Activated T-helper 1 cell treated with anti-CD3 and anti-CD28 coated beads, Interleukin-12 subunit alpha, Interleukin-12 subunit beta, Interleukin-2, Interleukin-4 antibody, amounts not matched to agents 30 ng/mL and 10 ng/mL and 1 ng/mL, durations not matched to agents 14 hours and 24 hours and 36 hours (primary cell): ENCODE measurements at regions of chr16 and their contacts with region 1.

Region 1: GRCh38 chr16:22001591-22001990 is 675 bp upstream of the PDZD9 start:
- DNase-seq: no peak
- H3K4me3 Mint-ChIP-seq: no peak overlapping the region
- H3K27ac Mint-ChIP-seq: no peak overlapping the region
- H3K4me1 Mint-ChIP-seq: peaks cover 19% of the 10 kb centered on the region
- H3K27me3 Mint-ChIP-seq: peaks cover 9% of the 10 kb centered on the region

Region 2: GRCh38 chr16:22077700-22078313 is 76.2 kb after region 1 on chr16:
- intact Hi-C with region 1: loop called (anchors 1 kb)
- DNase-seq: peak; percentile 48
- H3K4me3 Mint-ChIP-seq: no peak overlapping the region
- H3K27ac Mint-ChIP-seq: no peak overlapping the region
- H3K4me1 Mint-ChIP-seq: peaks cover 7% of the 10 kb centered on the region
- H3K27me3 Mint-ChIP-seq: no peaks in the 10 kb centered on the region

Region 3: GRCh38 chr16:22098405-22099255 is 97.0 kb after region 1 on chr16:
- intact Hi-C with region 1: loop called (anchors 1 kb)
- DNase-seq: peak; percentile 8
- H3K4me3 Mint-ChIP-seq: no peak overlapping the region
- H3K27ac Mint-ChIP-seq: no peak overlapping the region
- H3K4me1 Mint-ChIP-seq: no peaks in the 10 kb centered on the region
- H3K27me3 Mint-ChIP-seq: peaks cover 19% of the 10 kb centered on the region

Region 4: DNA sequence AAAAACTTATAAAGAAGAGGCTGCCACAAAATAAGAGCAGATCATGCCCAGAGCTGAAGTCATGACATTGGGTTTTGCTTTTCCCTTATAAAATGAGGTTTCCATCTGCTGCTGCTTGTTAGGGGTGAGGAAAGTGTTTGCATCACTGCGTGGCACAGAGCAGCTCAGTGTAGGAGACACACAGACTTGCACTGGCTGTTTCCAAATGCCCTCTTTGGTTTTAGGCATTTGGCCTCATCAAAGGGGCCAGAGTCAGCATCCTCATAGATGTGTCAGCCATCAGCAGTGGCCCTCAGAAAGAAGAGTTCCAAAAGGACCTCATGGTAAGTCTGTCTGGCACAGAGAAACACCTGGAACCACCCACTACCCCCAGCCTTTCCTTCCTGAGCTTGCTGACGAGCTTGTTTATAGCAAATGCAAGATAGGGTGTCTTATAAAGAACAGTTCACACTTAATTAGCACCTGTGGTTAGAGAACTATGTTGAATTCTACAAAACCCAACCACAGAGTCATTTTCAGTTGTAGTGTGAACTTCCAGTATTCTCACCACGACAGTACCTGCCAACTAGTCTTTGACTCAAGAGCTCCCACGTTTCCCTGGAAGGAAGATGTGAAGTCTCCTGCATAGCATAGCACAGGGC is 107.8 kb after region 1 on chr16:
- intact Hi-C with region 1: no loop called
- DNase-seq: no peak
- H3K4me3 Mint-ChIP-seq: no peak overlapping the region
- H3K27ac Mint-ChIP-seq: no peak overlapping the region
- H3K4me1 Mint-ChIP-seq: no peaks in the 10 kb centered on the region
- H3K27me3 Mint-ChIP-seq: peaks cover 11% of the 10 kb centered on the region